ENCODE measurements at regions of chr9 and their contacts with region 1.

Region 1: GRCh38 chr9:132575005-132575609 is 7.3 kb upstream of the BARHL1 start:
- DNase-seq: peak; percentile 91
- ATAC-seq: peak; percentile 85
- H3K4me3 Mint-ChIP-seq: no peak overlapping the region
- H3K27ac Mint-ChIP-seq: no peak overlapping the region
- H3K4me1 Mint-ChIP-seq: peaks cover 10% of the 10 kb centered on the region
- H3K27me3 Mint-ChIP-seq: peaks cover 52% of the 10 kb centered on the region
- CTCF ChIP-seq: peak; percentile 75

Region 2: DNA sequence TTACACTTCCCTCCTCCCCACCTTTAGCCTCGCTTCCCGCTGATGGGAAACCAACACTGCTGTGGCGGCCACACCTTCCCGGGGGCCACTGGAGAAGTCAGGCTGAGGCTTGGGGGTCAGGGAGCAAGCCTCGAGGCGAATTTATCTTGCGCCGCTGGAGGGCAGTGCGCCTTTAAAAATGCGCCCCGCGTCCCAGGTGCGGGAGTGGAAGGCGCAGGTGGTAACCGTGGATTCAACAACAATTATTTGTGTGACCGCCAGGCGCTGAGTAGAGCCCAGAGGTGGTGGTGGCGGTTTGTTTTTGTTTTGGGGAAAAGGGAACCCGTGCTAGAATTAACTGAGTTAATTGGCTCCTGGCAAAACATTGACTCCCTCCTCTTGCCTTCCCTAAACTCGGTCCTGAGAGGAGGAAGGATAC is 164.0 kb before region 1 on chr9:
- CTCF ChIA-PET with region 1: interaction called, 13 read pairs
- POLR2A ChIA-PET with region 1: no interaction called
- DNase-seq: peak; percentile 89
- ATAC-seq: peak; percentile 73
- H3K4me3 Mint-ChIP-seq: peak overlapping the region; percentile 72
- H3K27ac Mint-ChIP-seq: no peak overlapping the region
- H3K4me1 Mint-ChIP-seq: peaks cover 40% of the 10 kb centered on the region
- H3K27me3 Mint-ChIP-seq: peaks cover 30% of the 10 kb centered on the region
- CTCF ChIP-seq: peak; percentile 40; the same call in 1 of the 2 replicates

Region 3: DNA sequence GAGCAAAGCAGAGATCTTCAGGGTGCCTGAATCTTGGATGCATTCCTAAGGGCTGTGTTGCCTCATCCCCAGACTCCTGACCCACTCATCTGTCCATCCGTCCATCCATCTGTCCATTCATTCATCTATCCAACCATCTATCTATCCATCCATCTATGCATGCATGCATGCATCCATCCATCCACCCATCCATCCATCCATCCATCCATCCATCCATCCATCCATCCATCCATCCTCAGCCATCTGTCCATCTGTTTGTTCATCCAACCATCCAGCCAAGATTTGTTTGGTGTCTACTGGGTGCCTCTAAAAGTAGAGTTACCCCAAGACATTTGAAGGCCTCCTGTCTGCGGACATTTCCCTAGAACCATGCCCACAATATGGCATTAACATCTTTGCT is 20.4 kb before region 1 on chr9:
- CTCF ChIA-PET with region 1: no interaction called
- POLR2A ChIA-PET with region 1: no interaction called
- DNase-seq: no peak
- ATAC-seq: no peak
- H3K4me3 Mint-ChIP-seq: no peak overlapping the region
- H3K27ac Mint-ChIP-seq: no peak overlapping the region
- H3K4me1 Mint-ChIP-seq: no peaks in the 10 kb centered on the region
- H3K27me3 Mint-ChIP-seq: no peaks in the 10 kb centered on the region
- CTCF ChIP-seq: no peak

Region 4: DNA sequence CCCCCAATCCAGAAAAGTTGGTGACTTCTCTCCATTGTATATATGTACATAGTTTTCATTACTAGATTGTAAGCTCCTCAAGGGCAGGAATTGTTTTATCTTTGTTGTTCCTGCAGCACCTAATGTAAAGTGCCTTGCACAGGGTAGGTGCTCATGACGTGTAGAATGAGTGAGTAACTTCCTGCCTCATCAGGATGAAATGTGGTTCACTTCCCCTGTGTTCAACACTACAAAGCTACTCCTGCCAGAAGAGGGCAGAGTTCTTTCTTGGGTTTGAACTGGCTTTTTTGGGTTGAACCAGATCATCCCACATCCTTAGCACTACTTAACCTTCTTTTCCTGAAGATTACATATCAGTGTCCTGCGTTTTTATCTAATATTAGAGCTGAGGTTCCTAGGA is 119.0 kb after region 1 on chr9:
- CTCF ChIA-PET with region 1: no interaction called
- POLR2A ChIA-PET with region 1: no interaction called
- DNase-seq: no peak
- ATAC-seq: peak; percentile 84
- H3K4me3 Mint-ChIP-seq: no peak overlapping the region
- H3K27ac Mint-ChIP-seq: no peak overlapping the region
- H3K4me1 Mint-ChIP-seq: no peaks in the 10 kb centered on the region
- H3K27me3 Mint-ChIP-seq: peaks cover 6% of the 10 kb centered on the region
- CTCF ChIP-seq: 0 out of 2 replicates have a peak, but pooled peaks have one; percentile 17